Heart left ventricle (tissue), 16 donors: ENCODE measurements at regions of chr2 and their contacts with region 1.

Region 1: GRCh38 chr2:641873-642815 is 35.1 kb downstream of the TMEM18 start:
- DNase-seq: peak in 1 of 5 donors; percentile 28
- ATAC-seq: no peak
- H3K4me3 ChIP-seq: no peak overlapping the region
- H3K27ac ChIP-seq: no peak overlapping the region
- H3K4me1 ChIP-seq: peaks cover 0 to 2% (median 0%) of the 10 kb centered on the region in 12 donors
- H3K27me3 ChIP-seq: peaks cover 0 to 37% (median 3%) of the 10 kb centered on the region in 9 donors
- CTCF ChIP-seq: no peak
- POLR2A ChIP-seq: no peak

Region 2: GRCh38 chr2:444937-445884 is 196.9 kb before region 1 on chr2:
- intact Hi-C with region 1: no loop called
- DNase-seq: no peak
- ATAC-seq: no peak
- H3K4me3 ChIP-seq: no peak overlapping the region
- H3K27ac ChIP-seq: no peak overlapping the region
- H3K4me1 ChIP-seq: no peaks in the 10 kb centered on the region
- H3K27me3 ChIP-seq: peaks cover 0 to 19% (median 0%) of the 10 kb centered on the region in 9 donors
- CTCF ChIP-seq: no peak
- POLR2A ChIP-seq: no peak

Region 3: DNA sequence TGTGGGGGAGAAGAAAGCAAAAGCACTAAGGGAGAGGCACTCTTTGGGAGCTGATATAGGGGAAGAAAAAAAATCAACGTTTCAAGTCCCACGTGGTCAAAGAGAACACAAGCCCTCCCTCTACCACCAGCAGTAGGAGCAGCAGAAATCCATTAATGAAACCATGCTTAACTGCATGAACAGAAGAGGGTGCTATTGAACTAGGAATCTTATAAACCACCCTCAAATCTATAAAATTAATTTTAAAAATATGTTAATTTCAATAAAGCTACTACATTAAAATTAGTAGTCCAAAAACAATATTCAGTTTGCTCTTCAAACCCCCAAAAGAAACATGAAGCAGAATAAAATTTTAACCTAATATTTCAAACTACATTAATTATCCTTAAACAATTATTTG is 112.7 kb before region 1 on chr2:
- intact Hi-C with region 1: loop called in 1 of 10 experiments (anchors 5 kb)
- DNase-seq: no peak
- ATAC-seq: no peak
- H3K4me3 ChIP-seq: no peak overlapping the region
- H3K27ac ChIP-seq: no peak overlapping the region
- H3K4me1 ChIP-seq: no peaks in the 10 kb centered on the region
- H3K27me3 ChIP-seq: peaks cover 0 to 11% (median 0%) of the 10 kb centered on the region in 9 donors
- CTCF ChIP-seq: peak in 1 of 12 donors; percentile 17
- POLR2A ChIP-seq: no peak

Region 4: GRCh38 chr2:550860-551567 is 91.1 kb before region 1 on chr2:
- intact Hi-C with region 1: no loop called
- DNase-seq: no peak
- ATAC-seq: peak in 1 of 4 donors; percentile 22
- H3K4me3 ChIP-seq: no peak overlapping the region
- H3K27ac ChIP-seq: no peak overlapping the region
- H3K4me1 ChIP-seq: no peaks in the 10 kb centered on the region
- H3K27me3 ChIP-seq: peaks cover 0 to 44% (median 5%) of the 10 kb centered on the region in 9 donors
- CTCF ChIP-seq: no peak
- POLR2A ChIP-seq: no peak